PC-9 (cell line): ENCODE measurements at regions of chr16 and their contacts with region 1.

Region 1: GRCh38 chr16:81493755-81494433 is 49.3 kb downstream of the CMIP start:
- DNase-seq: peak; percentile 92 to 96
- H3K4me3 ChIP-seq: peak overlapping the region; percentile 28; the same call in 1 of the 2 replicates
- H3K27ac ChIP-seq: peak overlapping the region; percentile 91
- H3K4me1 ChIP-seq: peaks cover 42% of the 10 kb centered on the region
- H3K27me3 ChIP-seq: no peaks in the 10 kb centered on the region
- CTCF ChIP-seq: no peak

Region 2: DNA sequence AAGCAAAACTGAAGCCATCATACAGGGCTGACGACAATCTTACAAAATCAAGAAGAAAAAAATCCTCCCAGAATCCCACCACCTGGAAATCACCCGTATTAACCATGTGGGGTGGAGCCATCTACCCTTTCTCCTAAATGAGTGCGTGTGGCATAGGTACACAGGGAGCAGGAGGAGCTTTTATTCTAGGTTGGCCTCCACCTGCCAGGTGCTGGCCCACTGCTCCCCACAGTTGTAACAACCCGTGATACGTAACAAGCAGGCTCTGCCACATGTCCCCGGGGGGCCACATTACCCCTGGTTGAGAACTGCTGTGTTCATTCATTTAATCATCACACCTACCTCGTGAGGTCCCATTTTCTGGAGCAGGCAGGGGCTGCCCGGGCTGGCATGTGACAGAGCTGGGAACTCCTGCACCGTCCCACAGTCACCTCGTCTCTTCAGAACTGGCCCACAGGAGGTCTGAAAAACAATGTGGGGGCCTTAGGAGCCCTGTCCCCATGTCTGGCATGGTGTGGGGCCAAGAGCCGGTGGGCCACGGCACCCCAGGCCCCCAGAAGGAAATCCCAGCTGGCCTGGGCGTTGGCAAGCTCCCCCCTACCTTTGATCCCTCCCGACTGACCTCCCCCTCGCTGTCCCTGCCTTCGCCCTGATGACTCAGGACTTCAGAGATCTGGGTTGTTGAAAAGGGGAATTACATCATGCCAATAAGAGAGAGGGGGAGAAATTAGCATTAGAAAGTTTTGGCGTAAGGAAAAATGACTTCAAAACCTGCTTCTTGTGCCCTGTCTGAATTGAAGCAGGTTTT is 36.4 kb before region 1 on chr16:
- CTCF ChIA-PET with region 1: no interaction called
- POLR2A ChIA-PET with region 1: no interaction called
- intact Hi-C with region 1: no loop called
- DNase-seq: no peak
- H3K4me3 ChIP-seq: no peak overlapping the region
- H3K27ac ChIP-seq: no peak overlapping the region
- H3K4me1 ChIP-seq: no peaks in the 10 kb centered on the region; the same call in 1 of the 2 replicates
- H3K27me3 ChIP-seq: no peaks in the 10 kb centered on the region
- CTCF ChIP-seq: no peak

Region 3: DNA sequence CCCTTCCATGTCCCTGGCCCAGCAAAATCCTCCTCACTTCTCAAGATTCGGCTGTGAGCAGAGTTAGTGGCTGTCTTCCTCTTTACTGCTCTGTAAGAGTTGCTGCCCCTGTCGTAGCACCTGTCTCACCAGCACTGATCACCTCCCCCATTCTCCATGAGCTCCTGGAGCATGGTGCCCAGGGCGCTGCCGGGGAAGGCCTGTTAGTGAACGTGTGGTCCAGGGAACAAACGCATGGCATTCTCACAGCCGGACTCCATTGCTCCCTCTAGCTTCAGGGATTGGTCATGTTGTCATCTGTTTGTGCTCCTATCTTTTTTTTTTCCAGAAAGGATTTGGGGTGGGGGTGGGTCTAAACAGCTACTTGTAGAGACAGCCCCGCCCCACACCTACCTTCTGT is 91.9 kb after region 1 on chr16:
- CTCF ChIA-PET with region 1: no interaction called
- POLR2A ChIA-PET with region 1: no interaction called
- intact Hi-C with region 1: loop called (anchors 1 kb)
- DNase-seq: peak in 1 of 2 experiments; percentile 32
- H3K4me3 ChIP-seq: no peak overlapping the region
- H3K27ac ChIP-seq: peak overlapping the region; percentile 68
- H3K4me1 ChIP-seq: peaks cover 62% of the 10 kb centered on the region
- H3K27me3 ChIP-seq: no peaks in the 10 kb centered on the region
- CTCF ChIP-seq: peak; percentile 52

Region 4: DNA sequence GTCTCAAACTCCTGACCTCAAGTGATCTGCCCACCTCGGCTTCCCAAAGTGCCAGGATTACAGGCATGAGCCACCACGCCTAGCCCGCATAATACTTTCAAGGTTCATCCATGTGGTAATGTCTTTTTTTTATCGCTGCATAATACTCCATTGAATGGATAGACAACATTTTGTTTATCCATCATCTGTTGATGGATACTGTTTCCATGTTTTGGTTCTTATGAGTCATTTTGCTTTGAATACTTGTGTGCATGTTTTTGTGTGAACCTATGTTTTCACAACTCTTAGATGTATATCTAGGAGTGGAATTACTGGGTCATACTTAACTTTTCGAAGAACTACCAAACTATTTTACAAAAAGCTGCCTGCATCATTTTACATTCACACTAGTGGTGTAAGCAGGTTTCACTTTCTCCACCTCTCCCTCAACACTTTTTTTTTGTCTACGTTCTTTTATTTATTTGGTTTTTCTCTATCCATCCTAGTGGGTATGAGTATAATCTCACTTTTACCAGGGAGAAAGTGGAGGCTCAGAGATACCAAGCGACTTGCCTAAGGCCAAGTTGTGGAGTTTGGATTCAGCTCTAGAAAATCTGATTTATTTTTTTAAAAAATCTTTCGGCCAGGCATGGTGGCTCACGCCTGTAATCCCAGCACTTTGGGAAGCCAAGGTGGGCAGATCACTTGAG is 101.9 kb after region 1 on chr16:
- CTCF ChIA-PET with region 1: no interaction called
- POLR2A ChIA-PET with region 1: no interaction called
- intact Hi-C with region 1: loop called (anchors 5 kb)
- DNase-seq: peak in 1 of 2 experiments; percentile 65
- H3K4me3 ChIP-seq: no peak overlapping the region
- H3K27ac ChIP-seq: no peak overlapping the region
- H3K4me1 ChIP-seq: peaks cover 17% of the 10 kb centered on the region; the same call in 1 of the 2 replicates
- H3K27me3 ChIP-seq: no peaks in the 10 kb centered on the region
- CTCF ChIP-seq: no peak